ENCODE measurements at regions of chrX and their contacts with region 1.

Region 1: GRCh38 chrX:79081895-79082512 is 62.5 kb upstream of the GPR174 start:
- DNase-seq: peak in 6 of 9 experiments; percentile 6 to 79 (median 30)
- ATAC-seq: peak; percentile 89
- H3K4me3 ChIP-seq: no peak overlapping the region
- H3K4me3 Mint-ChIP-seq: peak overlapping the region; percentile 74
- H3K27ac ChIP-seq: peak overlapping the region in 1 of 2 experiments; percentile 9
- H3K27ac Mint-ChIP-seq: peak overlapping the region; percentile 94
- H3K4me1 ChIP-seq: peaks cover 27% of the 10 kb centered on the region
- H3K4me1 Mint-ChIP-seq: peaks cover 30% of the 10 kb centered on the region
- H3K27me3 ChIP-seq: no peaks in the 10 kb centered on the region
- H3K27me3 Mint-ChIP-seq: no peaks in the 10 kb centered on the region
- CTCF ChIP-seq: peak; percentile 54

Region 2: GRCh38 chrX:78119521-78120227 is 962.3 kb before region 1 on chrX:
- CTCF ChIA-PET with region 1: no interaction called
- POLR2A ChIA-PET with region 1: no interaction called
- intact Hi-C with region 1: loop called in 1 of 2 experiments (anchors 5 kb)
- DNase-seq: no peak
- ATAC-seq: peak; percentile 12
- H3K4me3 ChIP-seq: no peak overlapping the region
- H3K4me3 Mint-ChIP-seq: no peak overlapping the region
- H3K27ac ChIP-seq: no peak overlapping the region
- H3K27ac Mint-ChIP-seq: no peak overlapping the region
- H3K4me1 ChIP-seq: peaks cover 28% of the 10 kb centered on the region
- H3K4me1 Mint-ChIP-seq: peaks cover 66% of the 10 kb centered on the region
- H3K27me3 ChIP-seq: no peaks in the 10 kb centered on the region
- H3K27me3 Mint-ChIP-seq: no peaks in the 10 kb centered on the region
- CTCF ChIP-seq: no peak

Region 3: DNA sequence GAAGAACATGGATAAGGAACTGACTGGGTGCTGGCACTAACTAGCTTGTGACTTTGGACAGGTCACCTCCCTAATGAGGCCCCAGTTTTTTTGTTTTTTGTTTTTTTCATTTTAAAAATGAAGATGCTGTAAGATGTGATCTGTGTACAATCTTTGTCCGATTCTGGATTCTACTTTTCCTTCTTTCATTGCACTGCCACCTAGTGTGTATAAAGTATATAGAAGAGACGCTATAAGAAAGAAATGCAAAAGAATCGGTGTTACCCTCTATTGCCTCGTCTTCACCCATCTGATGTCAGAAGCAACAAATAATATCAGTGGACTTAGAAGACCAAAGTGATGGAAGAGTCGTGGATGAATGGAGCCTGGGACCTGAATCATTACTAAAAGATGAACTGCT is 195.5 kb before region 1 on chrX:
- CTCF ChIA-PET with region 1: interaction called, 5 read pairs
- POLR2A ChIA-PET with region 1: no interaction called
- intact Hi-C with region 1: loop called in 1 of 2 experiments (anchors 5 kb)
- DNase-seq: peak in 2 of 9 experiments; percentile 16 to 43
- ATAC-seq: peak; percentile 54
- H3K4me3 ChIP-seq: no peak overlapping the region
- H3K4me3 Mint-ChIP-seq: no peak overlapping the region
- H3K27ac ChIP-seq: no peak overlapping the region
- H3K27ac Mint-ChIP-seq: peak overlapping the region; percentile 16
- H3K4me1 ChIP-seq: no peaks in the 10 kb centered on the region
- H3K4me1 Mint-ChIP-seq: peaks cover 6% of the 10 kb centered on the region
- H3K27me3 ChIP-seq: no peaks in the 10 kb centered on the region
- H3K27me3 Mint-ChIP-seq: no peaks in the 10 kb centered on the region
- CTCF ChIP-seq: peak; percentile 36

Region 4: GRCh38 chrX:78957768-78958130 is 124.3 kb before region 1 on chrX:
- CTCF ChIA-PET with region 1: no interaction called
- POLR2A ChIA-PET with region 1: no interaction called
- intact Hi-C with region 1: loop called in 1 of 2 experiments (anchors 10 kb)
- DNase-seq: no peak
- ATAC-seq: no peak
- H3K4me3 ChIP-seq: no peak overlapping the region
- H3K4me3 Mint-ChIP-seq: no peak overlapping the region
- H3K27ac ChIP-seq: peak overlapping the region in 1 of 2 experiments; percentile 55
- H3K27ac Mint-ChIP-seq: peak overlapping the region; percentile 89
- H3K4me1 ChIP-seq: peaks cover 41% of the 10 kb centered on the region
- H3K4me1 Mint-ChIP-seq: peaks cover 67% of the 10 kb centered on the region
- H3K27me3 ChIP-seq: no peaks in the 10 kb centered on the region
- H3K27me3 Mint-ChIP-seq: no peaks in the 10 kb centered on the region
- CTCF ChIP-seq: no peak

Region 5: GRCh38 chrX:79412972-79413371 is 331.0 kb after region 1 on chrX:
- CTCF ChIA-PET with region 1: no interaction called
- POLR2A ChIA-PET with region 1: no interaction called
- intact Hi-C with region 1: loop called (anchors 2 to 5 kb)
- DNase-seq: peak in 2 of 9 experiments; percentile 49 to 64
- ATAC-seq: no peak
- H3K4me3 ChIP-seq: peak overlapping the region; percentile 25 to 27
- H3K4me3 Mint-ChIP-seq: peak overlapping the region; percentile 67
- H3K27ac ChIP-seq: no peak overlapping the region
- H3K27ac Mint-ChIP-seq: peak overlapping the region; percentile 32
- H3K4me1 ChIP-seq: no peaks in the 10 kb centered on the region
- H3K4me1 Mint-ChIP-seq: peaks cover 17% of the 10 kb centered on the region
- H3K27me3 ChIP-seq: no peaks in the 10 kb centered on the region
- H3K27me3 Mint-ChIP-seq: no peaks in the 10 kb centered on the region
- CTCF ChIP-seq: peak; percentile 55